Heart right ventricle (tissue), 16 donors: ENCODE measurements at regions of chr18 and their contacts with region 1.

Region 1: GRCh38 chr18:46264235-46264893 is 160.2 kb downstream of the HAUS1 start:
- DNase-seq: no peak
- ATAC-seq: peak in 5 of 8 donors; percentile 8 to 64 (median 38)
- H3K4me3 ChIP-seq: no peak overlapping the region
- H3K27ac ChIP-seq: peak overlapping the region in 7 of 10 donors; percentile 22 to 73 (median 48)
- H3K4me1 ChIP-seq: peaks cover 7 to 83% (median 44%) of the 10 kb centered on the region in 9 donors
- H3K27me3 ChIP-seq: no peaks in the 10 kb centered on the region
- CTCF ChIP-seq: no peak

Region 2: GRCh38 chr18:45186832-45187231 is 1077.5 kb before region 1 on chr18:
- intact Hi-C with region 1: no loop called
- DNase-seq: no peak
- ATAC-seq: no peak
- H3K4me3 ChIP-seq: no peak overlapping the region
- H3K27ac ChIP-seq: no peak overlapping the region
- H3K4me1 ChIP-seq: no peaks in the 10 kb centered on the region
- H3K27me3 ChIP-seq: peaks cover 0 to 3% (median 0%) of the 10 kb centered on the region in 7 donors
- CTCF ChIP-seq: no peak

Region 3: DNA sequence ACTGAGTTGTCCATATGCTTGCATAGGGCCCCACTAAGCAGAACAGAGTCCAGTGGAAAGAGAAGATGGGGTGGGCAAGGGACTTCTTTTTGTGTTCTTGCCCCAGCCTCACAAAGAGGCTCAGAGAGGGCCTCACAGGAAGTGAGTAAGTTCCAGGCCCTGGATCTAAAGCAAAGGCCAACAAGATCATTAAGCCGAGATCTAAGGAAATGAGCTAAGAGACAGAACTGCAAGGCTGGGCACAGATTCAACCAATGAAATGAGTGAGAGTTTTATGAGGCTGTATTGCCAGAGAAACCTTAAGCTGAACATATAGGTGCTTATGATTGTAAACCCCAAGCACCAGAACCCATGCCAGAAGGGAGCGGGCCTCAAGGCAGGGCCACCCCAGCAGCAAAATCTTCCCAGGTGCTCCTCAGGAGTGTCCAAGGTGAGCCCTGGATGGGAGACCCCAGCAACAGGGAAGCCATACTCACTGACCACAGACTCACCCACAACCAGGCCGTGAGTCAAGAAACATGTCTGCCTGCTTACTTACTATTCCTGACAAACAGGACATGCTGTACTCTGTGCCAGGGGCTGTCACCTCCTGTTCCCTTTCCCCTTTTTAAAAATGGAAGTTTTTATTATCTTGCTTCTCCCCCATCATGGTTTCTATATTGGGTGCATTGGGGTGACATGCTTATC is 500.2 kb before region 1 on chr18:
- intact Hi-C with region 1: loop called in 1 of 10 experiments (anchors 10 kb)
- DNase-seq: no peak
- ATAC-seq: peak in 7 of 8 donors; percentile 49 to 79 (median 71)
- H3K4me3 ChIP-seq: no peak overlapping the region
- H3K27ac ChIP-seq: peak overlapping the region in 7 of 10 donors; percentile 26 to 69 (median 58)
- H3K4me1 ChIP-seq: peaks cover 0 to 37% (median 9%) of the 10 kb centered on the region in 9 donors
- H3K27me3 ChIP-seq: no peaks in the 10 kb centered on the region
- CTCF ChIP-seq: no peak

Region 4: DNA sequence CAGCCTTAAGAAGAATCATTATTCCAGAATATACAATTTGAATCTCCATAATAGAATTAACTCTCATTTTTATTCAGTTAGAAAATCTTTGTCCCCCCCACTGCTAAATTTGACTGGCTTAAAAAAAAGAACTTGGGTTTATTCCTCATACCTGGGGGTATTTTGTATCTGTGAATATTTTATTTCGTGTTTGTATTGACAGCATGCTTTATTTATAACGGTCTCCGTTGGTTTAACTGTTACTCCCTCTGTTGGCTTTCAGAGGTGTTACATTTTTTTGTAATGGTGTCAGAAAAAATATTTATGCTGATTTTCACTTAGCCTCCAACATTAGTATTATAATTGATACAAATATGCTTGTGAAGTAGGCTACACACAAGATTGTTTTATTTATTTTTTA is 51.1 kb before region 1 on chr18:
- intact Hi-C with region 1: loop called in 1 of 10 experiments (anchors 10 kb)
- DNase-seq: no peak
- ATAC-seq: peak in 1 of 8 donors; percentile 51
- H3K4me3 ChIP-seq: no peak overlapping the region
- H3K27ac ChIP-seq: no peak overlapping the region
- H3K4me1 ChIP-seq: peaks cover 0 to 72% (median 29%) of the 10 kb centered on the region in 9 donors
- H3K27me3 ChIP-seq: no peaks in the 10 kb centered on the region
- CTCF ChIP-seq: peak; percentile 28 to 67 (median 60)